HEK293T (cell line): ENCODE measurements at regions of chr10 and their contacts with region 1.

Region 1: GRCh38 chr10:35353805-35354204 is 17.5 kb downstream of the CCNY start:
- DNase-seq: no peak

Region 2: GRCh38 chr10:35339942-35340341 is 13.9 kb before region 1 on chr10:
- CTCF ChIA-PET with region 1: interaction called, 11 read pairs
- POLR2A ChIA-PET with region 1: no interaction called
- DNase-seq: no peak